BJ (cell line): ENCODE measurements at regions of chr17 and their contacts with region 1.

Region 1: GRCh38 chr17:2354311-2354710 is 17.0 kb downstream of the SGSM2 start:
- DNase-seq: no peak
- H3K4me3 ChIP-seq: no peak overlapping the region
- H3K27me3 ChIP-seq: no peaks in the 10 kb centered on the region
- CTCF ChIP-seq: no peak

Region 2: DNA sequence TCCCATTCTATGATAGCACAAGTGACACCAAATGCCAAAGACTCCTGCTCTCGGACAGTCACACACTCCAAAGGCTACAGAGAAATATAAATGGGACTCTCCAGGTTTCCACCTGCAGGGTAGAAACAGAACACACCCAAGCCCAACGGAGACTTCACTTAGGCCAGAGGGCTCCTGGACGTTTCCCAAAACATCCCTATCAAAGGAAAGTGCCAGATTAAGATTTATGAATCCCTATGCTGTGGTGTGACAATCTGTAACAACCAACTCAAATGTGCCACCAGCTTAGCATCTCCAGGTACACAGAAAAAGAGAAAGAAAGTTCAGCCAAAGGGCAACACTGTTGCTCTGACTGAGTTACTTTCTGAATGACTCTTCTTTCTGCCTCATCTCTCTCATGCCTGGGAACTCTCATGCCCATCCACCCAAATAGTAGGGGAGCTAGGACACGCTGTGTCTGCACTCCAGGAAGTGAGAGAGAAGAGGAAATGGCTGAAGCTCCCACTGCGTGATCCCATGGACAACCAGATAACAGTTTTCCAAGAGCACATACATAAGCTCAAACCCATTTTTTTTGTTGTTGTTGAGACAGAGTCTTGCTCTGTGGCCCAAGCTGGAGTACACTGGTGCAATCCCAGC is 100.4 kb before region 1 on chr17:
- CTCF ChIA-PET with region 1: no interaction called
- POLR2A ChIA-PET with region 1: no interaction called
- DNase-seq: no peak
- H3K4me3 ChIP-seq: no peak overlapping the region
- H3K27me3 ChIP-seq: no peaks in the 10 kb centered on the region
- CTCF ChIP-seq: no peak

Region 3: GRCh38 chr17:2336215-2336851 is 18.0 kb before region 1 on chr17 and contains the start of gene TSR1:
- CTCF ChIA-PET with region 1: interaction called, 22 read pairs
- POLR2A ChIA-PET with region 1: no interaction called
- DNase-seq: peak; percentile 41
- H3K4me3 ChIP-seq: peak within 1 kb of the TSS; percentile 69
- H3K27me3 ChIP-seq: no peaks in the 10 kb centered on the region
- CTCF ChIP-seq: peak; percentile 49
- polyA plus RNA-seq, gene TSR1: 8.9 and 13.2 TPM in 2 replicates

Region 4: DNA sequence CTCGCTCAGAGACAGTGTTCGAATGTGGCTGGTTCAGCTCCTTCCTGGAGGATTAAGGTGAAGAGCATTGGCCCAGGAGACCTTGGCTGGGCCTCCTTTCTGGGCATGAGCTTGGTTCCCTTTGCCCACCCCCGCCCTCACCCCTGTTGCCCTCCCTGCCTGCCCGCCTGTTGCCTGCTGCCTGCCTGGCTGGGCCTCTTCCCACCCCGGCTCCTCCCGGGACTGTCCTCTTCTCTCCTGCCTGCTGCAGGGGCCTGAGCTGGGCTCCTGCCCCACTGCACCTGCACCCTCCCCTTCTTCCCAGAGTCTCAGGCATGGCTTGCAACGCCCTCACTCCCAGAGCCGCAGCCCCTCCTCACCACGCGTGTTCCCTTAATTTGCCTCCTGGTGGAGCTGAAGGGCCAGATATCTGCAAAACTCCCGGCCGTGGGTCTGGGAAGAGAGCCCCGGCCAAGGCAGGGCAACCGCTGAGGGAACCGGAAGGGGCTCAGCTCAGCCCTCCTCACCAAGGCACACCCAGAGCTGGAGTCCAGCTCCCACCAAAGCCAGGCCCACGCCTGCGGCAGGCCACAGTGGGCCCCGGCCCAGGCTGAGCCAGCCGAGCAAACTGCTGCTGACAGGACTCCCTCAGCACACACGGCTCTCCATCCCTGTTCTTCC is 15.4 kb after region 1 on chr17:
- CTCF ChIA-PET with region 1: interaction called, 10 read pairs
- POLR2A ChIA-PET with region 1: no interaction called
- DNase-seq: no peak
- H3K4me3 ChIP-seq: no peak overlapping the region
- H3K27me3 ChIP-seq: no peaks in the 10 kb centered on the region
- CTCF ChIP-seq: peak; percentile 12; the same call in 1 of the 2 replicates